Transverse colon (tissue), 4 donors: ENCODE measurements at regions of chr12 and their contacts with region 1.

Region 1: DNA sequence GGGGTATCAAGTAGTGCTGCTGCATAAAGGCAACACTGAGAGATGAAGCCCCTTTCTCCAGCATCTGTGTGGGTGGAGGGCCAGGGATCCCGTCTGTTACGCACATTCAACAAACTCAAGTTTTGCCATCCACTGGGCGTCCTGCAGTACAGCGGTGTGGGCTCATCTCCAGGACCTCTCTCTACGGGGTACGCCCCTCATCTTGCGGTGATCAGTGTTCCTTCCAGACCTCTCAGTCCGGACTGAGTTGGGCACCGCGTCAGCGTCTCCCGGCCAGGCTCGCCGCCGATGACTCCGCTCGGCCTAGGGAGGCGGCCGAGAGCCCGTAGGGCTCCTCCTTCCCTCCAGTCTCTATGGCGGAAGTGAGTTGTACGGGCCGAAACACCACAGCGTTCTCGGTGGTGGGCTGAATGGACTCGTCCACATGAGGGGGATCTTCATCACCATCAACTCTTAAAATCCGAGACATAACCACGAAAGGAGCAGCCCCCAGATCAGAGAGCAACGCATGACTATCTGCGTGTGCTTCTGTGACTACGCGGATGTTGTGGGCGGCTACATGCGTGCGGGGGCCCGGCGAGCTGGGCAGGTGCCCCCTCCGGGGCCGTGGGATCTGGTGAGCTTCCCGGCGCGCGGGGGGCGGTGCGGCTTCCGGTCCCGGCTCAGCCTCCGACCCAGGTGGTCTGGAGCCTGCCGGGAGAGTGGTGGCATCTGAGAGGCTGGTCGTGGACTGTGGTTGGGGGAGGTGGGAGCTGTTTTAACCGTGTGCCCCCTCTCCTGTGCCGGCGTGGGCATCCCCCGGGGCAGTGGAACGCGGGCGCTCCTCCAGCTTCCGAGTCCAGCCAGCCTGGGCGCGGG is at the start of gene ATG101:
- DNase-seq: peak; percentile 91
- H3K4me3 ChIP-seq: peak within 1 kb of the TSS; percentile 83 to 94 (median 89)
- H3K27ac ChIP-seq: peak within 1 kb of the TSS; percentile 85 to 91 (median 88)
- H3K4me1 ChIP-seq: peaks cover 17 to 21% (median 20%) of the 10 kb centered on the region in 4 donors
- H3K27me3 ChIP-seq: no peaks in the 10 kb centered on the region
- CTCF ChIP-seq: peak; percentile 48 to 72 (median 54)
- EP300 ChIP-seq: peak; percentile 42
- POLR2A ChIP-seq: peak; percentile 77
- total RNA-seq, gene ATG101: 15.7 to 64.1 (median 51.6) TPM

Region 2: DNA sequence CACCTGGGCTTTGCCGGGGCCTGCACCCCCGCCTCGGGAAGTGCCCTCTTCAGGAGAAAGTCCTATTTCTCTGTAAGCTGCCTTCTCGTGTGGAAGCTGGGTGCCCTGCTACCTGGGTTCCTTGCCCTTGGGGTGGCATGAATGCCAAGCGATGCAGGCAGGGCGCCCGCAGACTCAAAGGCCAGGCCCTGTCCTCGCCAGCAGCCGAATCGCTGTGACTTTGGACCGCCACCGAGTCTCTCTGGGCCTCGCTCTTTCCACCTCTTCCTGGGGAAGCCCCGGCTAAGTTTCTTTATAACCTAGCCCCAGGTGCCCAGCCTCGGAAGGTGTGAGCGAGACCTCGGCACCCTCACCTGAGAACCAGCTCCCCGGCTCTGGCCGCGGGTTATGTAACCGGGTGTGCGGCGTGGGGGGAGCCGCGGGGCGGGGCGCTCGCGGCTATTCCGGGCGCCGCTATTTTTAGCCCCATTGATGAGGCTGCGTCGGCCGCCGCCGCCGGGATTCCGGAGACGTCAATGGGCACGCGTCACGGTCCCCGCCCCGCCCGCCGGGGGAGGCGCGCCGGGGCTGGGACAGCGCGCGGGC is 32.9 kb before region 1 on chr12:
- in situ Hi-C with region 1: no loop called
- intact Hi-C with region 1: loop called (anchors 1 kb)
- DNase-seq: peak; percentile 94
- H3K4me3 ChIP-seq: peak overlapping the region in 3 of 4 donors; percentile 12 to 75 (median 62)
- H3K27ac ChIP-seq: peak overlapping the region; percentile 77 to 86 (median 80)
- H3K4me1 ChIP-seq: peaks cover 20 to 47% (median 34%) of the 10 kb centered on the region in 4 donors
- H3K27me3 ChIP-seq: no peaks in the 10 kb centered on the region
- CTCF ChIP-seq: no peak
- EP300 ChIP-seq: peak; percentile 94
- POLR2A ChIP-seq: peak; percentile 57